ENCODE measurements at regions of chr7 and their contacts with region 1.

Region 1: DNA sequence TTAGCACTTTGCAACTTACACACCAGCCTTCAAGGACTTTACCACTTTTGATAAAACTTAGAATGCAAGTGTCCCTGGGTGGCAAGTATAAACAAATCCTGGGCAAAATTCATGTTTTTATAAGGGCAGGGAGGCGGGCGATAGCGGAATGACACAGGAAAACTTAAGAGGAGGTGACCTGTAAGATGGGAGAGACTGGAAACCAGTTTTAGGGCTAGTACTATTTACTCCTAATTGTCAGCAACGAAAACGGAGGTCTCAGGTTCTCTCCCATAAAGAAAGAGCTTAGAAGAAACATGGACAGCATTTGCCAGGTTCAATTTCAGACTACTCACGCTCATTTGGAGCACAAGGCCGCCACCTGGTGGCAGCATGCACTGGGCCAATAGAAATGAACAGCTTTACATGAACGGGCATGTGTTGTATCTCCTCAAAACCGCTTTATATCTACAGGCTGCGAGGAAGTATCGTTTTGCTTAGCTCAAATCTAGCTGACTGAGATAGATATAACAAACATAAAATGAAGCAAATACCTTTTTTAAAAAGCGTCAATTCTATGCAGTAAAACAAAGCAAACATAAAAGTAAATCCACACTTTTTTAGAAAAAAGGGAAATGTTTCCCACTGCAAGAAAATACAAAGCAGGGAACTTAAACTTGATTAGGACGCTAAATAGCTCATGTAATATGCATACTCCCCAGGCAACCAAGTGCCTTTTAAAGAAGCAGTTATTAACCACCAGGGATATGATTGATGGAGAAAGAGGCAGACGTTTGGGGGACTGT is 37.6 kb upstream of the SVOPL start:
- DNase-seq: peak; percentile 69 to 88 (median 71)
- ATAC-seq: peak; percentile 67 to 89 (median 85)
- H3K4me3 ChIP-seq: no peak overlapping the region
- H3K27ac ChIP-seq: no peak overlapping the region
- H3K4me1 ChIP-seq: no peaks in the 10 kb centered on the region
- H3K27me3 ChIP-seq: no peaks in the 10 kb centered on the region
- CTCF ChIP-seq: peak; percentile 75 to 95 (median 90)
- POLR2A ChIP-seq: no peak

Region 2: GRCh38 chr7:137898839-137899721 is 839.7 kb before region 1 on chr7:
- intact Hi-C with region 1: loop called in 4 of 10 experiments (anchors 5 to 10 kb)
- DNase-seq: peak; percentile 79 to 89 (median 84)
- ATAC-seq: peak; percentile 92 to 95 (median 95)
- H3K4me3 ChIP-seq: peak overlapping the region in 5 of 12 donors; percentile 12 to 30 (median 26)
- H3K27ac ChIP-seq: peak overlapping the region in 10 of 12 donors; percentile 21 to 72 (median 50)
- H3K4me1 ChIP-seq: peaks cover 0 to 35% (median 20%) of the 10 kb centered on the region in 12 donors
- H3K27me3 ChIP-seq: no peaks in the 10 kb centered on the region
- CTCF ChIP-seq: peak; percentile 90 to 97 (median 95)
- POLR2A ChIP-seq: no peak

Region 3: DNA sequence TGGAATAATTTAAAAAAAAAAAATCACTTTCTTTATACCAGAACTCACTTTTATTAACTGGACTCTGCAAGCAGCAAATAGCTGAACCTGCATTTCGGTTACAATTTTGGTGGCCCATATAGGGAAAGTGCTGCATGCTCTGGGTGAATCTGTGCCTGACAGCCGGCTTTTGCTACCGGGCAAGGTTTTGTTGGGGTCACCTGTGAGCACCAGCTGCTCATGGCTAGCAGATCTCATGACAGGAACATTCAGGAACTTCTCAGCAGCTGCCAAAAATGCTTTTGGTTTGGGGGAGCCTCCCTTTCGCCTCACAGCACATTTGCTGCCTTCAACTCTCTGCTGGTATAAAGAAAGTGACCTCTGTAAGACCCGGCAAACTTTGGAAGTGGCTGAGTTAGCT is 723.6 kb before region 1 on chr7:
- intact Hi-C with region 1: loop called in 1 of 10 experiments (anchors 5 kb)
- DNase-seq: no peak
- ATAC-seq: no peak
- H3K4me3 ChIP-seq: no peak overlapping the region
- H3K27ac ChIP-seq: no peak overlapping the region
- H3K4me1 ChIP-seq: no peaks in the 10 kb centered on the region
- H3K27me3 ChIP-seq: no peaks in the 10 kb centered on the region
- CTCF ChIP-seq: no peak
- POLR2A ChIP-seq: no peak

Region 4: DNA sequence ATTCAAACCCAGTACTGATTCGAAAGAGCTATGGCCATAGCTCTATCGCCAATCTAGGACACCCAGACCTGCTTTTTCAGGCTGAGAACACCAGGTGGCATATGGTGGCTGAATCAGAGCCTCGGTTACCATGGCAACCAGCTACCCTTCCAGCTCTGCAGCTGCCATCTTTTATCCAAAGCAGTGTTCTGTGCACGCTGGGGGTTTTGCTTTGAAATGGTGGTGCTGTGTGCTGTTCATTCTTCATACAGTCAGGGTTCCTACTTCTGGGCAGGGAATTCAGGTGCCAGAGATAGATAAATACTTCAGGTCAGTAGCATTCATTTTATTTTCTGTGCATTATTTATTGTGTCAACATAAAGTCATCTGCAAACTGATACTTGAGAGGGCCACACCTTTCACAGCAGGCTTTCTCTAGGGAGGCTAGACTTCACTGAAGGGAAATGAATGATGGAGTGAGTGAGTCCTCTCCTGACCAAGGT is 577.1 kb before region 1 on chr7:
- intact Hi-C with region 1: loop called in 9 of 10 experiments (anchors 1 to 2 kb)
- DNase-seq: peak in 4 of 5 donors; percentile 80 to 88 (median 83)
- ATAC-seq: peak in 3 of 4 donors; percentile 79 to 93 (median 86)
- H3K4me3 ChIP-seq: no peak overlapping the region
- H3K27ac ChIP-seq: no peak overlapping the region
- H3K4me1 ChIP-seq: no peaks in the 10 kb centered on the region
- H3K27me3 ChIP-seq: no peaks in the 10 kb centered on the region
- CTCF ChIP-seq: peak; percentile 51 to 83 (median 68)
- POLR2A ChIP-seq: no peak

Region 5: DNA sequence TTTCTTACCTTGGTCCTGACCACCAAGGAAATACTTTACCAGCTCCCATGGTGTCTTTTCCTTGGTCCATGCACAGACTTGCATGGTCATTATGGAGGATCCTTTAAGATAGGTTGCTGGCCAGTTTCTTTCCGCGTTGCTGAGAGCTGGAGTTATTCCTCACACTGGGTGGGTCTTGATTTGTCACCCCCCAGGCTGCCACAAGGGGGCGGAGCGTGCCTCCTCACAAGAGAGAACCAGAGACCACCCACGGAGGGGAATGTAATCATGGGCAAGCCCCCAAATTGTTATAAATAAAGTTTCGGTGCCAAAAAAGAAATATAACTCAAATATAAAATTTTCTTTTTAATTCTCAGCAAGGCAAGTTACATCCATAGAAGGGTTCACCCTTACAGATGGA is 289.2 kb before region 1 on chr7:
- intact Hi-C with region 1: loop called in 1 of 10 experiments (anchors 10 kb)
- DNase-seq: no peak
- ATAC-seq: no peak
- H3K4me3 ChIP-seq: no peak overlapping the region
- H3K27ac ChIP-seq: no peak overlapping the region
- H3K4me1 ChIP-seq: no peaks in the 10 kb centered on the region
- H3K27me3 ChIP-seq: no peaks in the 10 kb centered on the region
- CTCF ChIP-seq: peak in 9 of 12 donors; percentile 11 to 38 (median 26)
- POLR2A ChIP-seq: no peak

Region 6: GRCh38 chr7:138785587-138786437 is 47.1 kb after region 1 on chr7:
- intact Hi-C with region 1: no loop called
- DNase-seq: no peak
- ATAC-seq: no peak
- H3K4me3 ChIP-seq: no peak overlapping the region
- H3K27ac ChIP-seq: no peak overlapping the region
- H3K4me1 ChIP-seq: no peaks in the 10 kb centered on the region
- H3K27me3 ChIP-seq: peaks cover 0 to 17% (median 0%) of the 10 kb centered on the region in 9 donors
- CTCF ChIP-seq: no peak
- POLR2A ChIP-seq: no peak